ENCODE measurements at regions of chr20 and their contacts with region 1.

Region 1: DNA sequence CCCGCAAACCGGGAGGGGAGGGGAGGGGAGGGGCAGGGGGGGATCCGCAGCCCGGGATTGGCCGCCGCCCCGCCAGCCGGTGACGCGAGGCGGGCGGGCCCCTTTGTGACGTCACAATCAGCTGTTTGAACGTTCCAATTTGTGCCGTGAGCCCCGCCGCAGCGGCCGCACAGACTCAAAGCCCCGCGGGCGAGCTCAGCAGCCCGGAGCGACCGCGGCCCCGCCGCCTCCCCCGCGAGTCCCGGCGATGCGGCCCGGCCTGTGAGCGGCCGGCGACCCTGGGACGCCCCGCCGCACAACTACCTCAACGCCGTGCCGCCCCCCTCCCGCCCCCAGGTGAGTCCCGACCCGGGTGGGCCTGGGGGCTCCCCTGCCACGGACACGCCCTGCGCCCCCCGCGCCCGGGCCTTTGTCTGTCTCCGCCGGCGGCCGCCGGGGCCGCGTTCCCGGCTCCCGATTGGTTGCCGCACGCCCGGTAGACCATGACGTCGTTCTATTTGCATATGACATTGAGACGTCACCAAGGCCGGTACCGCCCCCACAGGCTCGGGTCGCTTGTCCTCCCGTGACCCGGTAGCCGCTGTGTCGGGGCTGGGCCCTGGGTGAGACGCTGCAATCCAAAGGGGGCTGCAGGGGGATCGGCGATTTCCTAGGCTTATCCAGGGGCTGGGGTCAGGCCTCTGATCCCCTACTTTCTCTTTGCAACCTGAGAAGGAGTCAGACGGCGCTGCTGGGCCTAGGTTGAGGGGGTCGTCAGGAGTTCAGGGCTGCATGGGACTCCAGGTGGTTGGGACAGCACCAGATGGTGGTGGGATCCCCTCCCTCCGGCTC is at the start of gene TP53INP2:
- DNase-seq: peak; percentile 95 to 97
- ATAC-seq: peak; percentile 86
- H3K4me3 ChIP-seq: peak within 1 kb of the TSS; percentile 64 to 67
- H3K27ac ChIP-seq: peak within 1 kb of the TSS; percentile 71 to 74
- H3K4me1 ChIP-seq: no peaks in the 10 kb centered on the region
- H3K27me3 ChIP-seq: no peaks in the 10 kb centered on the region
- total RNA-seq, gene TP53INP2: 12.9 to 29.7 TPM

Region 2: DNA sequence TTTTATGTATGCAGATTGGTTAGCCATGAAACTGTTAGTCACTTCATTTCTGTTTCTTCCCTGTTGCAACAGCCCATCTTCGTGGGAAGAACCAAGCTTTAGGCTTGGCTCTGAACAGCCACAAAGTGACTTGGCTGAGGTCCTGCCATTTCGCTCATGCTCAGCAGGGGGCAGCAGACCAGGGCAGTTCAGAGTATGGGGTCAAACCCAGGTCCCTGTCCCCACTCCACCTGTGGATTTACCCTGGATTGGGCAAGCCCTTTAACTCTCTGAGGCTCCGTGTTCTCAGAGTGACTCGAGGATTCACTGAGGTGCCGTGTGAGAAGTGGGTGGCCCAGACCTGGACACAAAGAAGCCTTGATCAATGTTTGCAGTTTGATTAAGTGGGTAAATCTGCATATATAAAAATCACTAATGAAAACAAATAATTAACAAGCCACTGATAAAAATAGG is 165.7 kb before region 1 on chr20:
- intact Hi-C with region 1: no loop called
- DNase-seq: peak in 1 of 2 donors; percentile 79
- ATAC-seq: peak; percentile 68
- H3K4me3 ChIP-seq: no peak overlapping the region
- H3K27ac ChIP-seq: no peak overlapping the region
- H3K4me1 ChIP-seq: no peaks in the 10 kb centered on the region
- H3K27me3 ChIP-seq: no peaks in the 10 kb centered on the region

Region 3: GRCh38 chr20:34558320-34559218 is 145.8 kb before region 1 on chr20 and contains the start of gene MAP1LC3A:
- intact Hi-C with region 1: loop called (anchors 5 kb)
- DNase-seq: peak; percentile 97 to 99
- ATAC-seq: peak; percentile 97
- H3K4me3 ChIP-seq: peak within 1 kb of the TSS; percentile 63 to 71
- H3K27ac ChIP-seq: peak within 1 kb of the TSS; percentile 62 to 81
- H3K4me1 ChIP-seq: no peaks in the 10 kb centered on the region
- H3K27me3 ChIP-seq: no peaks in the 10 kb centered on the region
- total RNA-seq, gene MAP1LC3A: 45.0 to 46.1 TPM

Region 4: DNA sequence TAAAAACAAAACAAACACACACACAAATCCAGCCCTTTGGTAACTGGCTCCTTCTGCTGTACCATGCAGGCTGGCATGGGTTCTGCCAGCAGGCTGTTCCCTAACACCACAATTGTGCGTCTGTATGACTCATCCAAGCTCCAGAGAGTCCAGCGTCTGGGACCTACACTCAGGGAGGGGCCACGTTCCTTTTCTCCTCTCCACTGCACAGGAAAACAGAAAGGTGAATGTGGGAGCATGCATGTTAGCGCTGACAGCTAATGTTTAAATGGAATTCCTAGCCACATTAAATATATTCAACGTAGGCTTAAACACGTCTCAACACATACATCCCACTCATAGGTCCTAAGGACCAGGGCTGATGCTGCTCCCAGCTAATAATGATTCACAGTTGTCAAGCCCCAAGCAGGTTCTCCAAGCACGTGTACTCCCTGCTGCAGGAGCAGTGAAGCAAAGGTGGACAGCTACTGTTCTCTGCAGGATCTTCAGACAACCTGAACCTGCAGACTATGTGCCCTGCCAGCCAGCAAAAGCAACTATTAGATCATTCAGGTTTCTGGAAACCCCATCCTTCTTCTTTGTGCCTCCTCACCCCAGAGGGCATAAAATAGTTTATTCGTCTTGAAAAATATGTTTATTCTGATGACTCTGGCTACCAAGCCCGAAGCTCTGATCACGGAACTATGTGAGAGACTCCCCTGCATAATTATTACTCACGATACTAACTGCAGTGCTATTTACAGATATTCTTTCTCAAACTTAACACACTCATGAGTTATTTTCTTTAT is 125.0 kb before region 1 on chr20:
- intact Hi-C with region 1: loop called in 1 of 2 experiments (anchors 2 kb)
- DNase-seq: peak in 1 of 2 donors; percentile 71
- ATAC-seq: peak; percentile 84
- H3K4me3 ChIP-seq: no peak overlapping the region
- H3K27ac ChIP-seq: no peak overlapping the region
- H3K4me1 ChIP-seq: peaks cover 0 to 3% of the 10 kb centered on the region in 2 donors
- H3K27me3 ChIP-seq: no peaks in the 10 kb centered on the region

Measured in aorta (tissue), 5 donors.